Upper lobe of right lung (tissue), 1 donor: ENCODE measurements at regions of chr14 and their contacts with region 1.

Region 1: DNA sequence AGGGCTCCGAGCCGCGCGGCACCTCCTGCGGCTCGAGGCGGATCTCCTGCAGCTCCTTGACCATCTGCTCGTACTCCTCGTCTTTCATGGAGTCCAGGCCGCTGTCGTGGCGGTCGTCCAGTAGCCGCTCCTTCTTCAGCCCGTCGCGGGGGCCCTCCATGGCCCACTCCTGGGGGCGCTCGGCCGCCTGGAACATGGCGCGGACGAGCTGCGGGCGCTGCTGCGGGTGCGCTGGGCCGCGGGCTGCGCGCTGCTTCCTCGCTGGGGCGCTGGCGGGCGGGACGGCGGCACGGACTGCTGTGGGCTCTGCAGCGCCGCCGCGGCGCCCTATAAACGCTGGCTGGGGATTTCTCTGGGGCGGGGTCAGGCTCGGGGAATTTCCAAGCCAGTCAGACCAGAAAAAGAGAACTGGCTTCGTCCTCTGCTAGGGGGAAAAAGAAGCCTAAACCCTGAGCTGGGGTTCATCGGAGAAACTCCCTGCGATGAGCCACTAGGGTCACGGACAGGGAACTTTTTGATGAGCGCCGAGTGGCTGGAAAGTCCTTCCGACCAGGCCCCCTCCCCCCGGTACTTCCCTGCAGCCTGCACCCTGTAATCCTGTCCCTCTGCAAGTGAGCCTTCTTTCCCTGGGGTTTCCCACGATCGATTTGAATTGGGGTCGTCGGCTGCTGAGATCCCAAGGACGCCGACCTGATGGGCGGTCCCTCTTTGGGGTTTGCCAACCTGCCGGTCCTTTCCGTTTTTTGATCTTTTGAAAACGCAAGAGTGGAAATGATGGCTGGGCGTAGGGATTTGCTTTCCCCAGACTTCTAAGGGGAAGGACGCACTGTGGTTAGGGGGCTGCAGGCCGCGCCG is at the start of gene NFKBIA:
- DNase-seq: peak; percentile 96
- ATAC-seq: peak; percentile 77
- H3K4me3 ChIP-seq: peak within 1 kb of the TSS; percentile 97
- H3K27ac ChIP-seq: peak within 1 kb of the TSS; percentile 100
- H3K4me1 ChIP-seq: peaks cover 40% of the 10 kb centered on the region
- H3K27me3 ChIP-seq: no peaks in the 10 kb centered on the region
- CTCF ChIP-seq: peak; percentile 36
- total RNA-seq, gene NFKBIA: 361 TPM

Region 2: DNA sequence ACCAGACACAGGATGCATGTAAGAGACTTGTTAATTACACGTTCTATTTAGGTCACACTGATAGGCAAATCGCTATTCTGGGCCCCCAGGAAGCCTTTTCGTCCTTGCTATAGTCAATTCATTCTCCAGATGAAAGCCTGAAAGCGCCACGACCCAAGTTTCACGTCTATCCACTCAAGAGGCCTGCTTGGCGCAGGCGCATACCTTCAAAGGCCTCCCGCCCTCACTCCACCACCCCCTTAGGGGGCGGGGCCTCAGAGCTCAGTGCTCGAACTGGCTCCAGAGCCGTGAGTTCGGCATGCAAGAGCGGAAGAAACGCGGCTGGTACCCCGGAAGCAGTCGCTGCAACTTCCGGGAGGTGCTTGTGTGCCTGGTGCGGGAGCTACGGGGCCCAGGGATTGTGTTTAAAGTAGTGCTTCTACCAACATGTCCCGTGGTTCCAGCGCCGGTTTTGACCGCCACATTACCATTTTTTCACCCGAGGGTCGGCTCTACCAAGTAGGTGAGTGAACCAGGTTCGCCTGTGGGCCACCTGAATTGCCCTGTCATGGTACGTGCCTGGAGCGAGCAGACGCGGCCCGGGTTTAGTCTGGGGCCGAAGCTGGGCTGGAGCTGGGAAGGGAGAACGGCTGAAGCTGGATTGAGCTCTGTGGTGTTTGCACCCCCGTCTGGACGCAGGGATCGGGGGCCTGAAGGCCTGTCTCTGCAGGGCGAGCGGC is 112.5 kb before region 1 on chr14 and contains the start of gene PSMA6:
- intact Hi-C with region 1: loop called (anchors 10 kb)
- DNase-seq: peak; percentile 100
- ATAC-seq: peak; percentile 99
- H3K4me3 ChIP-seq: peak within 1 kb of the TSS; percentile 94
- H3K27ac ChIP-seq: peak within 1 kb of the TSS; percentile 91
- H3K4me1 ChIP-seq: peaks cover 31% of the 10 kb centered on the region
- H3K27me3 ChIP-seq: no peaks in the 10 kb centered on the region
- CTCF ChIP-seq: no peak
- total RNA-seq, gene PSMA6: 157 TPM

Region 3: GRCh38 chr14:35336494-35337268 is 68.0 kb before region 1 on chr14:
- intact Hi-C with region 1: loop called (anchors 5 kb)
- DNase-seq: peak; percentile 95
- ATAC-seq: peak; percentile 85
- H3K4me3 ChIP-seq: peak overlapping the region; percentile 30
- H3K27ac ChIP-seq: peak overlapping the region; percentile 94
- H3K4me1 ChIP-seq: peaks cover 96% of the 10 kb centered on the region
- H3K27me3 ChIP-seq: no peaks in the 10 kb centered on the region
- CTCF ChIP-seq: peak; percentile 13